ENCODE measurements at regions of chr19 and their contacts with region 1.

Region 1: GRCh38 chr19:17996826-17997316 is 11.1 kb upstream of the ARRDC2 start:
- DNase-seq: peak; percentile 91 to 94
- H3K4me3 ChIP-seq: peak overlapping the region in 1 of 4 donors; percentile 4
- H3K27ac ChIP-seq: no peak overlapping the region
- H3K4me1 ChIP-seq: peaks cover 9 to 21% (median 16%) of the 10 kb centered on the region in 4 donors
- H3K27me3 ChIP-seq: peaks cover 0 to 30% (median 0%) of the 10 kb centered on the region in 3 donors
- CTCF ChIP-seq: peak in 6 of 7 experiments; percentile 90 to 99 (median 98)
- EP300 ChIP-seq: no peak
- POLR2A ChIP-seq: no peak

Region 2: GRCh38 chr19:17944301-17944700 is 52.6 kb before region 1 on chr19:
- intact Hi-C with region 1: loop called (anchors 2 kb)
- DNase-seq: peak in 1 of 2 donors; percentile 47
- H3K4me3 ChIP-seq: no peak overlapping the region
- H3K27ac ChIP-seq: no peak overlapping the region
- H3K4me1 ChIP-seq: peaks cover 11 to 32% (median 27%) of the 10 kb centered on the region in 4 donors
- H3K27me3 ChIP-seq: peaks cover 0 to 13% (median 9%) of the 10 kb centered on the region in 3 donors
- CTCF ChIP-seq: no peak
- EP300 ChIP-seq: no peak
- POLR2A ChIP-seq: no peak

Region 3: GRCh38 chr19:18074190-18074589 is 77.3 kb after region 1 on chr19:
- intact Hi-C with region 1: no loop called
- DNase-seq: no peak
- H3K4me3 ChIP-seq: no peak overlapping the region
- H3K27ac ChIP-seq: no peak overlapping the region
- H3K4me1 ChIP-seq: no peaks in the 10 kb centered on the region
- H3K27me3 ChIP-seq: peaks cover 0 to 10% (median 0%) of the 10 kb centered on the region in 3 donors
- CTCF ChIP-seq: no peak
- EP300 ChIP-seq: no peak
- POLR2A ChIP-seq: no peak

Measured in stomach (tissue), 19 donors.